Activated CD8-positive, alpha-beta T cell treated with anti-CD3 and anti-CD28 coated beads, Interleukin-2, amount 10 ng/mL, durations not matched to agents 7 days and 5 days (primary cell): ENCODE measurements at regions of chr2 and their contacts with region 1.

Region 1: DNA sequence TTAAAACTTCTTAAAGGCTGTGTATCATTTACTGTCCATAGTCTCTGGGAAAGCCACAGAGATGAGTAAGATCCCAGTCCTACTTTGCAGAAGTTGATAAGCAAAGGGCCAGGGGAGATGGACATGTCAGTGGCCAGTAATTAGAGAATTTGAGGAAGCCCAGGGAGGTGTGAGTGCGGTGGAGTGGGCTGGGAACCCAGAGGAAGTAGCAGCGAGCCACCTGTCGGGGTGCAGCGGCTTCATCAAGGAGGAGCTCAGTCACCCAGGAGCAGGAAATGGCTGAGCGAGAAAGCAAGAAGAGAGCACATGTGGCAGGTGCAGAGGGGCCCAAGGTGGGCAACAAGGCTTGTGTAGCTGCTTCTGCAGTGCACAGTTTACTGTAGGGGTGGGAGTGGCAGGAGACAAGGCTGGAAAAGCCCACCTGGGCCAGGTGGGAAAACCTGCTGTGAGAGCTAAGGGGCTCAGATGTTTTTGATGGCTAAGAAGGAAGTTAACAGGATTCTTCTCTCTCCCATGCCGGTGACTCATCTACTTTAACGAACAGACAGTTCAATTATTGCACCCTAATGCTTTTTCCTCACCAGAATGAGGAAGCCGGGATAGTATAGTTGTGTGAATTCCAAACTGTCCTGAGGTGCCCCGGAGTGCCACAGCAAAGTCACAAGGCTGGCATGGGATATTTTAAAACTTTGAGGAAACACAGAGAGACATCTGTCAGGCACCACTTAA is 34.8 kb upstream of the MGAT5 start:
- DNase-seq: peak; percentile 65
- ATAC-seq: peak; percentile 78
- H3K4me3 Mint-ChIP-seq: peak overlapping the region; percentile 40
- H3K27ac Mint-ChIP-seq: peak overlapping the region; percentile 85
- H3K4me1 Mint-ChIP-seq: peaks cover 49% of the 10 kb centered on the region
- H3K27me3 Mint-ChIP-seq: no peaks in the 10 kb centered on the region

Region 2: DNA sequence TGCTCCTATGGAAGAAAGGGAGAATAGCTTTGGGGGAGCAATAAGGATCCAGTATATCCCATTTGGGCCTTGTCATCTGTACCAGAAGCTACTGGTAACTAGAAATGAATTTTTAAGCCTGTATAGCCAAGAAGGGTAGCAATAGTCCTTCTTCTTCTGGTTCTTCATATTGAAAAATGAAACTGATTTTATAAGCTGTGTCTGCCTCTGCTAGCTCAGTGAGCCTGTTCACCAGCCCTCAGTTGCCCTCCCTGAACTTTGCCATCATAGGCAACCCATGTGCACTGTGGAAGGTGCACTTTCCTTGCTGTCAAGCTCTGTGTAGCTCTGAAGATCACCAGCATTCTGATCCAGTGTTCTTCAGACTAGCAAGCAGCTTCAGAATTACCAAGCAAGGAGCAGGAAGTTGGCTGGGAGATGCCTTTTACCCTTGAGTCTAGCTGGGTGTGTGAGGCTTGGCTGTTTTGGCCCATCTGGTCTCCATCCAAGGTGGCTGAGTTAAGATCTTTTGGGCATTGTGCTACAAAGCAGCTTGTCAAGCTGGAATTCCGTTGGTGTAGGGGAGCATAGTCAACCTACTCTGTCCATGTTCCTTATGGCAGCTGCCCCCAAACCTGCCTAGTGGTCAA is 21.0 kb before region 1 on chr2:
- CTCF ChIA-PET with region 1: interaction called, 11 read pairs
- POLR2A ChIA-PET with region 1: interaction called, 3 read pairs
- DNase-seq: no peak
- ATAC-seq: peak; percentile 57
- H3K4me3 Mint-ChIP-seq: peak overlapping the region; percentile 26
- H3K27ac Mint-ChIP-seq: peak overlapping the region; percentile 52
- H3K4me1 Mint-ChIP-seq: peaks cover 39% of the 10 kb centered on the region
- H3K27me3 Mint-ChIP-seq: no peaks in the 10 kb centered on the region

Region 3: GRCh38 chr2:134207564-134208209 is 11.4 kb before region 1 on chr2:
- CTCF ChIA-PET with region 1: interaction called, 64 read pairs
- POLR2A ChIA-PET with region 1: interaction called, 3 read pairs
- DNase-seq: peak; percentile 68
- ATAC-seq: peak; percentile 90
- H3K4me3 Mint-ChIP-seq: no peak overlapping the region
- H3K27ac Mint-ChIP-seq: no peak overlapping the region
- H3K4me1 Mint-ChIP-seq: peaks cover 10% of the 10 kb centered on the region
- H3K27me3 Mint-ChIP-seq: no peaks in the 10 kb centered on the region

Region 4: GRCh38 chr2:134232868-134233727 is 14.0 kb after region 1 on chr2:
- CTCF ChIA-PET with region 1: interaction called, 25 read pairs
- POLR2A ChIA-PET with region 1: interaction called, 3 read pairs
- DNase-seq: no peak
- ATAC-seq: peak; percentile 78
- H3K4me3 Mint-ChIP-seq: peak overlapping the region; percentile 37
- H3K27ac Mint-ChIP-seq: peak overlapping the region; percentile 84
- H3K4me1 Mint-ChIP-seq: peaks cover 69% of the 10 kb centered on the region
- H3K27me3 Mint-ChIP-seq: no peaks in the 10 kb centered on the region